Sigmoid colon (tissue), 7 donors: ENCODE measurements at regions of chr6 and their contacts with region 1.

Region 1: DNA sequence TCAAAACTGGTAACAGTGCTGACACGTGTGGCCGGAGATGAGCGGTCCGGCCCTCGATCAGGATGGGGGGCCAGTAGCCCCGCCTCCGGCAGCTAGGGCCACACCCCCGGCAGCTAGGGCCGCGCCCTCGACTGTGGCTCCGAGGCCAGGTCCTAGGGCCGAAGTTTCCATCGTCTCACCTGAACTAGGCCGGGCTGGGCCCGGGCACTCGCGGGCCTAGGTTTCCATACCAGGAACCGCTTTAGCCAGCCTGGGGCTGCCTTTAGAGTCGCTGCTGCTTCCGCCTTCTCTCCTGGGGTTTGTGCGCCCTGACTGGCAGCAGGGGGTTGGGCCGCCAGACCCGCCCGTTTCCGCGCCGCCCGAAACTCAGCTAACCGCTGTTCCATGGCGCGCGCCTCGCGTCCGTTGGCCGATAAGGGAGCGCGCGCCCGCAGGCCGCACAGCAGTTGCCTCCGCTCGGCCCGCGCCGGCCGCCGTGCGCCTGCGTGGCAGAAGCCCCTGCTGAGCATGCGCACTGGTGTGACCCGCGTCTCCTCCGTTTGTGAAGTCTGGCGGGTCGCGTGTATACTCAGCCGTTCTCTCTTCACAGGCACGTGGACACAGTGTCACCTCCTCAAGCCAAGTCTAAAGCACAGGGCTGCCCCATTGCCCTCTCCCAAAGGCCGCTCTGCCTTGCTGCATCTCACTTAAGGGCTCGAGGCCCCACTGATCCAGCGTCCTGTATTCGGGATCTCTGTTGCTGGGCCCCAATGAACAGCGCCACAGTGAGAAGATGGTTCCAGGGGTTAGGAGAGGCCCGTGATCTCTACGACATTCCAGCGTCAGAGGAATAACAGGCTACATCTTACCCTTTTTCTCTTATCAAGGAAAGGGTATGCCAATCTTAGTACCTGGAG is at the start of gene SAYSD1:
- DNase-seq: peak; percentile 96
- H3K4me3 ChIP-seq: peak within 1 kb of the TSS; percentile 59 to 78 (median 76)
- H3K27ac ChIP-seq: peak within 1 kb of the TSS; percentile 90 to 99 (median 94)
- H3K4me1 ChIP-seq: peaks cover 0 to 17% (median 15%) of the 10 kb centered on the region in 4 donors
- H3K27me3 ChIP-seq: no peaks in the 10 kb centered on the region
- CTCF ChIP-seq: no peak
- EP300 ChIP-seq: no peak
- POLR2A ChIP-seq: peak in 1 of 2 donors; percentile 45
- total RNA-seq, gene SAYSD1: 11.5 to 20.8 (median 18.9) TPM

Region 2: GRCh38 chr6:39724787-39725631 is 610.1 kb after region 1 on chr6 and contains the start of gene KIF6:
- intact Hi-C with region 1: loop called (anchors 10 kb)
- DNase-seq: peak; percentile 97
- H3K4me3 ChIP-seq: peak within 1 kb of the TSS; percentile 61 to 94 (median 78)
- H3K27ac ChIP-seq: peak within 1 kb of the TSS; percentile 55 to 74 (median 69)
- H3K4me1 ChIP-seq: peaks cover 0 to 10% (median 5%) of the 10 kb centered on the region in 4 donors
- H3K27me3 ChIP-seq: no peaks in the 10 kb centered on the region
- CTCF ChIP-seq: no peak
- EP300 ChIP-seq: no peak
- POLR2A ChIP-seq: no peak
- total RNA-seq, gene KIF6: 0.36 to 0.99 (median 0.55) TPM in 3 of 4 donors, not detected in the other

Region 3: GRCh38 chr6:41072676-41073623 is 1958.0 kb after region 1 on chr6 and contains the start of gene NFYA:
- intact Hi-C with region 1: loop called (anchors 10 kb)
- DNase-seq: peak; percentile 100
- H3K4me3 ChIP-seq: peak within 1 kb of the TSS; percentile 78 to 96 (median 90)
- H3K27ac ChIP-seq: peak within 1 kb of the TSS; percentile 96 to 100 (median 99)
- H3K4me1 ChIP-seq: peaks cover 0 to 32% (median 27%) of the 10 kb centered on the region in 4 donors
- H3K27me3 ChIP-seq: no peaks in the 10 kb centered on the region
- CTCF ChIP-seq: peak in 2 of 4 experiments; percentile 7 to 39
- EP300 ChIP-seq: no peak
- POLR2A ChIP-seq: peak; percentile 32 to 45
- total RNA-seq, gene NFYA: 7.6 to 12.1 (median 10.9) TPM